Activated T-helper 1 cell treated with anti-CD3 and anti-CD28 coated beads, Interleukin-12 subunit alpha, Interleukin-12 subunit beta, Interleukin-2, Interleukin-4 antibody, amounts not matched to agents 30 ng/mL and 10 ng/mL and 1 ng/mL, durations not matched to agents 14 hours and 24 hours and 36 hours (primary cell): ENCODE measurements at regions of chr18 and their contacts with region 1.

Region 1: DNA sequence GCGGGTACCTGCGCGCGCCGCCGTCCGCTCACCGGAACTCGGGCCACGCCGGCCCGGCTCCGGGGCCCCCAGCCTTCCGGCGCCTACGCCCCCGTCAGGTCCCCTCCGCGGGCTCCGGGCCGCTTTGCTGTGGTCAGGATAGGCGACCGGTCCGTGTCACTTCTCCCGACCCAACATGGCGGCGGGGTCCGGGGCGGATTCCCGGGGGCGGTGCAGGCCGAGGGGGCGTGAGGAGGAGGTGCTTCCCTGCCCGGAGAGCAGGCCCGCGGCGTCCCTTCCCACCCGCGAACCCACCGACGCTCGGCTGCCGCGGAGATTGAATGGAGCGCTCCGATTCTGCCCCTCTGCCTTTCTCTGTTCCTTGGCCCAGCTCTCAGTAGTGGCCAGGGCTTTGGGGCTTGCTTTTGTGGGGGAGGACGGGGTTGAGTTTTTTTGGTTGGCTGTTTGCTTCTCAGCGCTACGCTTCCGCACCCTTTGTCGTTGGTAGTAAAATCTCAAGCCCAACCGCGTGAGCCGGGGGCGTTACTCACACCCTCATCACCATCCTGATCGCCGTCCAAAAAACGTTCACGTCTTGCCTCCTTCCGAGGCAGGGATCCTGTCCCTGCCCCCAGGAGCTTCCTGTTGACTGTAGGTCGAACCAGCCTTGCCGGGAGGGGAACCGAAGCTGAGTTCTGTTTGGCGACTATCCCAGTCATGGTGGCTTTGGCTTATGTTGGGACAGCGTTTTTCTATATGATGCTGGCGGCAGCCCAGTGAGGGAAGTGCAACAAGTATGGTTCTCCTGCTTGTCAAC is 532 bp upstream of the YES1 start:
- DNase-seq: peak; percentile 81
- H3K4me3 Mint-ChIP-seq: peak overlapping the region; percentile 90
- H3K27ac Mint-ChIP-seq: peak overlapping the region; percentile 99
- H3K4me1 Mint-ChIP-seq: peaks cover 64% of the 10 kb centered on the region
- H3K27me3 Mint-ChIP-seq: no peaks in the 10 kb centered on the region

Region 2: GRCh38 chr18:158128-159036 is 654.2 kb before region 1 on chr18 and contains the start of gene USP14:
- intact Hi-C with region 1: loop called (anchors 2 kb)
- DNase-seq: peak; percentile 94
- H3K4me3 Mint-ChIP-seq: peak within 1 kb of the TSS; percentile 98
- H3K27ac Mint-ChIP-seq: peak within 1 kb of the TSS; percentile 95
- H3K4me1 Mint-ChIP-seq: peaks cover 29% of the 10 kb centered on the region
- H3K27me3 Mint-ChIP-seq: peaks cover 5% of the 10 kb centered on the region
- total RNA-seq, gene USP14: 95.3 and 99.6 TPM in 2 replicates

Region 3: DNA sequence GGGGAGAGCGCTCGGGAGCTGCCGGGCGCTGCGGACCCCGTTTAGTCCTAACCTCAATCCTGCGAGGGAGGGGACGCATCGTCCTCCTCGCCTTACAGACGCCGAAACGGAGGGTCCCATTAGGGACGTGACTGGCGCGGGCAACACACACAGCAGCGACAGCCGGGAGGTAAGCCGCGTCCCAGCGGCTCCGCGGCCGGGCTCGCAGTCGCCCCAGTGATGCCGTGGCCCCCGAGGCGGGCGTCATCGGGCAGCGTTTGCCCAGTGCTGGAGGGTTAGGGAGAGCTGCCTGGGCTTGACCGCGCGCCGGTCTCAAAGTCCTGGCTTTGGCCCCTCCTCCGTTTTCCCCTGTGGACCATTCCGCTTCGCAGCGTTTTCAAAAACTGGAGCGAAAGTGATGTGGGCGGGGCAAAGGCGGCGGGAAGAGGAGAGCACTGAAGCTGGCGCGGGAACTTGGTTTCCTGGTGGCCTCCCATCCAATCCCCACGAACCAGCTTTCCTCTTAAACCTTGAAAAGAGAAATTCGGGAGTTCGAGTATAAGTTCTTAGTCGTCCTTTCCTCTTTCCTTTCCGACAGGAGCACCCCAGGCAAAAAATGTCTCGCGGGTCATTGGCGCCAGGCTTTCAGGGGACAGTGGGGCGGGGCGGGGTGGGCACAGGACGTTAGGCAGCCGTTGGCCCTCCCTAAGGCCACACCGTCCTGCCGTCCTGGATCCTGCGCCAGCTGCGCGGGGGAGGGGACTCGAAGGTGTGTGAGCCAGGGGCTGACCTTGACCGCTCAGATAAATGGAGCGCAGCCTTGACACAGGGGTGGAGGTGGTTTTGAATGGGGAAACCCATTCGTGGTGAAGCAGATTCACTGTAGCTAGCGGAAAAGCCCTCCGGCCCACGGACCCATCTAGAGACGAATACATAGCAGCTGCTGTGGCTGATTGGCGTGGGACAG is 154.3 kb before region 1 on chr18:
- intact Hi-C with region 1: loop called (anchors 1 kb)
- DNase-seq: peak; percentile 74
- H3K4me3 Mint-ChIP-seq: peak overlapping the region; percentile 96
- H3K27ac Mint-ChIP-seq: peak overlapping the region; percentile 93
- H3K4me1 Mint-ChIP-seq: peaks cover 39% of the 10 kb centered on the region
- H3K27me3 Mint-ChIP-seq: no peaks in the 10 kb centered on the region

Region 4: GRCh38 chr18:741931-742512 is 70.6 kb before region 1 on chr18:
- intact Hi-C with region 1: loop called (anchors 1 kb)
- DNase-seq: no peak
- H3K4me3 Mint-ChIP-seq: no peak overlapping the region
- H3K27ac Mint-ChIP-seq: no peak overlapping the region
- H3K4me1 Mint-ChIP-seq: no peaks in the 10 kb centered on the region
- H3K27me3 Mint-ChIP-seq: no peaks in the 10 kb centered on the region

Region 5: GRCh38 chr18:2571200-2572143 is 1758.9 kb after region 1 on chr18 and contains the starts of genes METTL4 and NDC80:
- intact Hi-C with region 1: loop called (anchors 5 kb)
- DNase-seq: peak; percentile 79
- H3K4me3 Mint-ChIP-seq: peak within 1 kb of the TSS; percentile 97
- H3K27ac Mint-ChIP-seq: peak within 1 kb of the TSS; percentile 97
- H3K4me1 Mint-ChIP-seq: peaks cover 66% of the 10 kb centered on the region
- H3K27me3 Mint-ChIP-seq: no peaks in the 10 kb centered on the region
- total RNA-seq, gene METTL4: 15.0 and 26.2 TPM in 2 replicates
- total RNA-seq, gene NDC80: 41.2 and 42.6 TPM in 2 replicates